Caco-2 (cell line): ENCODE measurements at regions of chr3 and their contacts with region 1.

Region 1: DNA sequence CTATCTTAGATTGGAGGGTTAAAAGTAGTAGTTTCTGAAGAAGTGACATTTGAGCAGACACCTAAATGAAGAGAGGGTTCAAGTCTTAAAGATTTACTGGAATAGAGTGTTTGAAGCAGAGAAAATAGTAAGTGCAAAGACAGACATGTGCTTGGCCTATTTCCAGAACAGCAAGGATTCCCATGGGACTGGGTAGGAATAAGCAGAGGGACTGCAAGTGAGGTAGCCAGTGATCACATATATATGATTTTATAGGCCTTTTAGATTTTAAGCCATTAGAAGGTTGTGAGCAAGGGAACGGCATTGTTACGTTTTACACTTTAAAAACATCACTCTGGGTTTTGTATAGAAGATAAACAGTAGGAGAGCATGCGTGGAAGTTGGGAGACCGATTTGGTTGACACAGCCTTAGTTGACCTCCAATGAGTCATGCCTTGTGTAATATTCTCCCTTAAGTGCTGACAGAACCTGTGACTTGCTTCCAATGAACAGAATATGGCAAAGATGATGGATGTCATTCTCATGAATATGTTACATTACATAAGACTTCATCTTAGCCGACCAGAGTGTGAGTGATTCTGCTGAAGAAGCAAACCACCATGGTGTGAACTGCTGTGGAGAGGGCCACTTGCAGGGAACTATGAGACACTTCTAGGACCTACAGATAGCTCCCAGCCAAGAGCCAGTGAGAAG is 37.1 kb upstream of the SLC4A7 start:
- DNase-seq: no peak
- H3K4me3 ChIP-seq: no peak overlapping the region
- H3K4me3 Mint-ChIP-seq: no peak overlapping the region
- H3K27ac Mint-ChIP-seq: no peak overlapping the region
- H3K4me1 ChIP-seq: no peaks in the 10 kb centered on the region
- H3K4me1 Mint-ChIP-seq: peaks cover 8% of the 10 kb centered on the region
- H3K27me3 ChIP-seq: no peaks in the 10 kb centered on the region
- H3K27me3 Mint-ChIP-seq: no peaks in the 10 kb centered on the region
- CTCF ChIP-seq: no peak

Region 2: GRCh38 chr3:27345959-27346865 is 175.1 kb before region 1 on chr3:
- CTCF ChIA-PET with region 1: interaction called, 12 read pairs
- POLR2A ChIA-PET with region 1: no interaction called
- intact Hi-C with region 1: no loop called
- DNase-seq: no peak
- H3K4me3 ChIP-seq: no peak overlapping the region
- H3K4me3 Mint-ChIP-seq: no peak overlapping the region
- H3K27ac Mint-ChIP-seq: no peak overlapping the region
- H3K4me1 ChIP-seq: no peaks in the 10 kb centered on the region
- H3K4me1 Mint-ChIP-seq: no peaks in the 10 kb centered on the region
- H3K27me3 ChIP-seq: no peaks in the 10 kb centered on the region
- H3K27me3 Mint-ChIP-seq: no peaks in the 10 kb centered on the region
- CTCF ChIP-seq: no peak

Region 3: DNA sequence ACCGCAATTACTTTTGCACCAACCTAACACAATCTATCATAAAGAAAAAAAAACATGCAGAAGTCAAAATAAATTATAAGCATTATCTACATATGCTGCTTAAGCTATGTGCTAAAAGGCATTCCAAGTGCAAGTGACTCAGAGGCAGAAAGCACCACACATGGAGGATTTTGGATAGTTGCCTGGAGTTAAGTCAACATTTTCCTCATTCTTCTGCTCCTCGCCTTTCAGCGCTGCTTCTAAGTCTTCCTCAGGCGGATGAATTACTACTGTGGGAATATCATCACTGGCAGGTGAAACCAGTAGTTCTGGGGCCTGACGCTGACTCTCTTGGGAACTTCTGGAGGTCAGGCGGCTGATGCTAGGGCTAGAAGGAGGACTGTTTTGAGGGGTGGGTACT is 90.2 kb before region 1 on chr3:
- CTCF ChIA-PET with region 1: no interaction called
- POLR2A ChIA-PET with region 1: no interaction called
- intact Hi-C with region 1: no loop called
- DNase-seq: no peak
- H3K4me3 ChIP-seq: no peak overlapping the region
- H3K4me3 Mint-ChIP-seq: no peak overlapping the region
- H3K27ac Mint-ChIP-seq: no peak overlapping the region
- H3K4me1 ChIP-seq: peaks cover 7% of the 10 kb centered on the region
- H3K4me1 Mint-ChIP-seq: no peaks in the 10 kb centered on the region
- H3K27me3 ChIP-seq: no peaks in the 10 kb centered on the region
- H3K27me3 Mint-ChIP-seq: no peaks in the 10 kb centered on the region
- CTCF ChIP-seq: no peak

Region 4: DNA sequence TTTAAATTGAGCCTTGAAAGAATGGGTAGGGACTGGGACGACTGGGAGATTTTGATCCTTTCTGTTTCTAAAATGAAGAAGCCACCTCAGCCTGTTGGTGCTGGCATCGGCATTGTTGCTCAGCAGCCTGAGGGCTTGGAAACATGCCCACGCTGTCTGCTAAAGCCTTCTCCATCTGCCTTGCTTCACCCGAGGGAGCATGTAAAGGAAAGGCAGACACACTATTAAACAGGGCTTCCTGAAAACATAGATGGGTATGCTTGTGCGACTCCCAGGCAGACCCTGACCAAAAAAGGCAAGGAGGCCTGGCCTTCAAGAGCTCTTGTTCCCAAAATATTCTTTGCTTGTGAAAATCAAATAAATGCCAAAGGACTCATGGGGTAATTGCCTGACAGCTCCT is 47.1 kb after region 1 on chr3:
- CTCF ChIA-PET with region 1: no interaction called
- POLR2A ChIA-PET with region 1: no interaction called
- intact Hi-C with region 1: no loop called
- DNase-seq: no peak
- H3K4me3 ChIP-seq: no peak overlapping the region
- H3K4me3 Mint-ChIP-seq: no peak overlapping the region
- H3K27ac Mint-ChIP-seq: no peak overlapping the region
- H3K4me1 ChIP-seq: no peaks in the 10 kb centered on the region
- H3K4me1 Mint-ChIP-seq: no peaks in the 10 kb centered on the region
- H3K27me3 ChIP-seq: no peaks in the 10 kb centered on the region
- H3K27me3 Mint-ChIP-seq: no peaks in the 10 kb centered on the region
- CTCF ChIP-seq: no peak